ENCODE measurements at regions of chr2 and their contacts with region 1.

Region 1: GRCh38 chr2:165953655-165954606 is at the start of gene TTC21B:
- DNase-seq: peak; percentile 98
- ATAC-seq: peak; percentile 85
- H3K4me3 ChIP-seq: peak within 1 kb of the TSS; percentile 81
- H3K27ac ChIP-seq: peak within 1 kb of the TSS; percentile 85
- H3K4me1 ChIP-seq: peaks cover 24% of the 10 kb centered on the region
- H3K27me3 ChIP-seq: no peaks in the 10 kb centered on the region
- CTCF ChIP-seq: peak; percentile 97
- total RNA-seq, gene TTC21B: 21.7 and 35.5 TPM in 2 replicates

Region 2: GRCh38 chr2:165401285-165401852 is 552.6 kb before region 1 on chr2:
- CTCF ChIA-PET with region 1: interaction called, 3 read pairs
- POLR2A ChIA-PET with region 1: no interaction called
- intact Hi-C with region 1: loop called (anchors 10 kb)
- DNase-seq: peak; percentile 92
- ATAC-seq: peak; percentile 23
- H3K4me3 ChIP-seq: no peak overlapping the region
- H3K27ac ChIP-seq: no peak overlapping the region
- H3K4me1 ChIP-seq: peaks cover 23% of the 10 kb centered on the region
- H3K27me3 ChIP-seq: no peaks in the 10 kb centered on the region
- CTCF ChIP-seq: peak; percentile 97

Region 3: DNA sequence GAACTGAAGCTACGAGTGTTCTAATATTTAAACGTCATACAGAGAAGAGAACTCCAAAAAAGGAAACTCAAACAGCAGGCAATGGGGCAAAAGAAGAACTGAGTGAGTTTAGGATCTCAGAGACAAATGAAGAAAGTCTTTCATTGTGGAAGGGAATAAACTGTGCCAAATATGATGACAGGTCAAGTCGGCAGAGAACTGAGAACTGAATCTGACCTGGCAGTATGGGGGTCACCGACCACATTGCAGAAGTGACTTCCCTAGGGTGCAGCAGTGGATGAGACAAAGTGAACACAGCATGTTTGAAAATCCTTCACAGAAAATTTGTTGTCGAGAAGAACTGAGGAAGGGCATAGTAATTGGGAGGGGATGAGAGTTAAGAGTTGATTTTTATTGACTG is 56.2 kb before region 1 on chr2:
- CTCF ChIA-PET with region 1: no interaction called
- POLR2A ChIA-PET with region 1: no interaction called
- intact Hi-C with region 1: loop called (anchors 2 kb)
- DNase-seq: no peak
- ATAC-seq: no peak
- H3K4me3 ChIP-seq: no peak overlapping the region
- H3K27ac ChIP-seq: no peak overlapping the region
- H3K4me1 ChIP-seq: peaks cover 17% of the 10 kb centered on the region
- H3K27me3 ChIP-seq: no peaks in the 10 kb centered on the region
- CTCF ChIP-seq: no peak

Region 4: GRCh38 chr2:166127217-166128155 is 173.6 kb after region 1 on chr2 and contains the start of gene SCN1A:
- CTCF ChIA-PET with region 1: interaction called, 26 read pairs
- POLR2A ChIA-PET with region 1: no interaction called
- intact Hi-C with region 1: loop called (anchors 1 kb)
- DNase-seq: peak; percentile 81
- ATAC-seq: peak; percentile 74
- H3K4me3 ChIP-seq: no peak within 1 kb of the TSS
- H3K27ac ChIP-seq: no peak within 1 kb of the TSS
- H3K4me1 ChIP-seq: no peaks in the 10 kb centered on the region
- H3K27me3 ChIP-seq: peaks cover 79% of the 10 kb centered on the region
- CTCF ChIP-seq: peak; percentile 94
- total RNA-seq, gene SCN1A: 0.04 TPM in 1 of 2 replicates, not detected in the other

Region 5: DNA sequence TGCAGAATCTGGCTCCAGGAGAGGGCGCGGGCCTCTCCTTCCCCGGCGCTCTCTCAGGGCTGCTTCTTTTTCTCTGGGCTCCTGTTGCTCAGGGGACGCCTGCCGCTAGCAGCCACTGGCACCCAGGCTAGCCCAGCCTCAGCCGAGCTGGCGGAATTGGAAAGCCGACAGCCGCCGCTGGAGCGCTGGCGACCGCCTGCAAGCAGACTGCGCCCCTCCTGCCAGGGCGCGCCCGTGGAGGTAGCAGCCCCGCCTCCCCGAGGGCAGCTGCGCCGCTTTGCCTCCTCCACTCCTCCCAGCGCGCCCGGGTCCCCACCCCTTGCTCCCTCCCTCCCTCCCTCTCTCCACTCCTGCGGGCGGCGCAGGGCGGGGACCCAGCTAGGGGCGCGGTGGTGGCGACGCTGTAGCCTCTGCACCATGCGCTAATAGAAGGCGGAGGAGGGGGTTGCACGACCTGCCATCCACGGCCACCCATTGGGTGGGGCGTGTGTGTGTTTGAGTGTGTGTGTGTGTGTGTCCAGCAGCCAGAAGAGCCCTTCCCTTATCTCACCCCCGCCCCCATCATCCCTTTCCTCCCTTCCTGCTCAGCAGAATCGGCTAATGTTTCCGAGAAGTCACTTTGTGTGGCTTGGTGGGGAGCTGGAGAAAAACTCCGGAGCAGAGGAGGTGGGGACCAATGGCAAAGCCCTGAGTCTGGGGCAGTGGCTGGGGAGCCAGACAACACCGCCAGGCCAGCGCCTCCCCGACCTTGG is 422.0 kb after region 1 on chr2 and contains the start of gene SCN9A:
- CTCF ChIA-PET with region 1: no interaction called
- POLR2A ChIA-PET with region 1: no interaction called
- intact Hi-C with region 1: loop called (anchors 5 kb)
- DNase-seq: peak; percentile 92
- ATAC-seq: peak; percentile 90
- H3K4me3 ChIP-seq: peak within 1 kb of the TSS; percentile 79
- H3K27ac ChIP-seq: no peak within 1 kb of the TSS
- H3K4me1 ChIP-seq: peaks cover 14% of the 10 kb centered on the region
- H3K27me3 ChIP-seq: peaks cover 6% of the 10 kb centered on the region; the same call in 1 of the 2 replicates
- CTCF ChIP-seq: peak; percentile 50
- total RNA-seq, gene SCN9A: 3.4 and 7.0 TPM in 2 replicates